SK-N-SH (cell line): ENCODE measurements at regions of chr12 and their contacts with region 1.

Region 1: GRCh38 chr12:122951979-122952892 is 14.0 kb downstream of the ABCB9 start:
- DNase-seq: peak; percentile 36
- H3K4me3 ChIP-seq: no peak overlapping the region; a peak in 1 of 4 replicates
- H3K27ac ChIP-seq: peak overlapping the region in 1 of 2 experiments; percentile 57; a peak in 1 of 4 replicates
- H3K4me1 ChIP-seq: 0 out of 4 replicates have a peak, but pooled peaks cover 0 to 11% of the 10 kb centered on the region in 2 experiments
- H3K27me3 ChIP-seq: no peaks in the 10 kb centered on the region
- CTCF ChIP-seq: peak; percentile 83
- EP300 ChIP-seq: no peak
- RAD21 ChIP-seq: peak; percentile 98

Region 2: GRCh38 chr12:122860346-122861090 is 91.7 kb before region 1 on chr12:
- CTCF ChIA-PET with region 1: interaction called, 148 read pairs
- POLR2A ChIA-PET with region 1: no interaction called
- DNase-seq: peak; percentile 89
- H3K4me3 ChIP-seq: peak overlapping the region in 1 of 2 experiments; percentile 44; a peak in 1 of 4 replicates
- H3K27ac ChIP-seq: no peak overlapping the region; a peak in 1 of 4 replicates
- H3K4me1 ChIP-seq: peaks cover 0 to 22% of the 10 kb centered on the region in 2 experiments; a peak in 1 of 4 replicates
- H3K27me3 ChIP-seq: no peaks in the 10 kb centered on the region
- CTCF ChIP-seq: peak; percentile 85
- EP300 ChIP-seq: no peak
- RAD21 ChIP-seq: peak; percentile 92

Region 3: GRCh38 chr12:122871851-122872780 is 80.1 kb before region 1 on chr12:
- CTCF ChIA-PET with region 1: interaction called, 28 read pairs
- POLR2A ChIA-PET with region 1: no interaction called
- DNase-seq: peak; percentile 74
- H3K4me3 ChIP-seq: no peak overlapping the region
- H3K27ac ChIP-seq: peak overlapping the region; percentile 38 to 92; a peak in 3 of 4 replicates
- H3K4me1 ChIP-seq: peaks cover 20 to 51% of the 10 kb centered on the region in 2 experiments; a peak in 3 of 4 replicates
- H3K27me3 ChIP-seq: no peaks in the 10 kb centered on the region
- CTCF ChIP-seq: no peak
- EP300 ChIP-seq: no peak
- RAD21 ChIP-seq: no peak

Region 4: GRCh38 chr12:122895705-122896636 is 56.3 kb before region 1 on chr12 and contains the start of gene VPS37B:
- CTCF ChIA-PET with region 1: interaction called, 11 read pairs
- POLR2A ChIA-PET with region 1: no interaction called
- DNase-seq: peak; percentile 99
- H3K4me3 ChIP-seq: peak within 1 kb of the TSS; percentile 80 to 81
- H3K27ac ChIP-seq: peak within 1 kb of the TSS; percentile 47 to 52; a peak in 2 of 4 replicates
- H3K4me1 ChIP-seq: peaks cover 11 to 20% of the 10 kb centered on the region in 2 experiments; a peak in 3 of 4 replicates
- H3K27me3 ChIP-seq: no peaks in the 10 kb centered on the region
- CTCF ChIP-seq: no peak
- EP300 ChIP-seq: peak; percentile 3 to 37; a peak in 1 of 4 replicates
- RAD21 ChIP-seq: no peak
- polyA plus RNA-seq, gene VPS37B: 20.9 and 41.1 TPM in 2 replicates